Natural killer cell (primary cell): ENCODE measurements at regions of chr16 and their contacts with region 1.

Region 1: DNA sequence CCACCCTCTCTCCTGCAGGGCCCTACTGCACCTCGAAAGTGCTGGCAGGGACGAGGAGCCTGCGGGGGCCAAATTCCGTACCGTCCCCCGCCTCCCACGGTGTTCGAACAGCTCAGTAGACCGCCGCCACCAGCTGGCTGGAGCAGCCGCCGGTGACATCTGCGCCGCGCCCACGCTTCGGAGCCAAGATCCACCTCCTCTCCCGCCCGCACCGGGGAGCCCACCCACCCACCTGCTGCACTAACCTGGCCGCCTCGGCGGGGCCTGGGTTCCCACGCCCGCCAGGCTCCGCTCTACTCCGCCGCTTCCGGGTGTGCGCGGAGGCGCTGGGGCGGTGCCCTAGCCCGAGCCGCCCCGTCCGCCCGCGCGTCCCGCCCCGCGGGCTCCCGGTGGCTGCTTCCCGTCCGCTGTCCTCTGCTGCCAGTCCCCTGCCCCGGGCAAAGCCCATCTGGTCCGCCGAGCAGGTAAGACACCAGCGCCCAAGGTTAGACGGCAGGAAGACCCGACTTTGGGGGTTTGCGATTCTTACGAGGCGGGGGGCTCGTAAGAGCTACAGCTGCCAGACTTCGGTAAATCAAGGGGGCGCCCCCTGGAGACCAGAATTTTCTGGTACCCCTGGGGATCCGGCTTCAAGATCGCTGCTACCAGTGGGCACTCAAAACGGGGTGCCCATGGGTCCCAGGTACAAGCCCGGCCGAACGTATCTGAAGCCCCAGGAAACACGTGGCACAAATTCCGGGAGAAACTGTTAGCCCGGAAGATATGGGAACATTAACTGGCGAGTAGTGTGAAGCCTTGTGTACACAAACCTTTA is at the starts of genes FBXL8 and TRADD:
- DNase-seq: peak; percentile 82 to 90
- ATAC-seq: peak; percentile 69 to 85 (median 76)
- H3K4me3 ChIP-seq: peak within 1 kb of the TSS; percentile 93
- H3K4me3 Mint-ChIP-seq: peak within 1 kb of the TSS; percentile 88
- H3K27ac ChIP-seq: peak within 1 kb of the TSS; percentile 88
- H3K27ac Mint-ChIP-seq: peak within 1 kb of the TSS; percentile 80 to 85
- H3K4me1 ChIP-seq: peaks cover 82% of the 10 kb centered on the region
- H3K4me1 Mint-ChIP-seq: peaks cover 25 to 46% of the 10 kb centered on the region in 2 donors
- H3K27me3 ChIP-seq: peaks cover 27% of the 10 kb centered on the region
- H3K27me3 Mint-ChIP-seq: peaks cover 0 to 16% of the 10 kb centered on the region in 2 donors
- CTCF ChIP-seq: peak; percentile 61
- total RNA-seq, gene FBXL8: 5.2 to 8.3 (median 6.3) TPM
- total RNA-seq, gene TRADD: 15.2 to 27.5 (median 26.8) TPM

Region 2: GRCh38 chr16:66977341-66978113 is 182.3 kb before region 1 on chr16:
- intact Hi-C with region 1: loop called (anchors 1 kb)
- DNase-seq: peak; percentile 88 to 93
- ATAC-seq: peak; percentile 93 to 100 (median 99)
- H3K4me3 ChIP-seq: no peak overlapping the region
- H3K4me3 Mint-ChIP-seq: no peak overlapping the region
- H3K27ac ChIP-seq: no peak overlapping the region
- H3K27ac Mint-ChIP-seq: no peak overlapping the region
- H3K4me1 ChIP-seq: no peaks in the 10 kb centered on the region
- H3K4me1 Mint-ChIP-seq: no peaks in the 10 kb centered on the region
- H3K27me3 ChIP-seq: no peaks in the 10 kb centered on the region
- H3K27me3 Mint-ChIP-seq: peaks cover 0 to 4% of the 10 kb centered on the region in 2 donors
- CTCF ChIP-seq: peak; percentile 92

Region 3: GRCh38 chr16:67017810-67018488 is 141.9 kb before region 1 on chr16:
- intact Hi-C with region 1: loop called (anchors 1 kb)
- DNase-seq: peak; percentile 58 to 91
- ATAC-seq: peak; percentile 79 to 87 (median 81)
- H3K4me3 ChIP-seq: no peak overlapping the region
- H3K4me3 Mint-ChIP-seq: no peak overlapping the region
- H3K27ac ChIP-seq: no peak overlapping the region
- H3K27ac Mint-ChIP-seq: no peak overlapping the region
- H3K4me1 ChIP-seq: peaks cover 13% of the 10 kb centered on the region
- H3K4me1 Mint-ChIP-seq: peaks cover 0 to 3% of the 10 kb centered on the region in 2 donors
- H3K27me3 ChIP-seq: peaks cover 13% of the 10 kb centered on the region
- H3K27me3 Mint-ChIP-seq: peaks cover 0 to 17% of the 10 kb centered on the region in 2 donors
- CTCF ChIP-seq: peak; percentile 46

Region 4: DNA sequence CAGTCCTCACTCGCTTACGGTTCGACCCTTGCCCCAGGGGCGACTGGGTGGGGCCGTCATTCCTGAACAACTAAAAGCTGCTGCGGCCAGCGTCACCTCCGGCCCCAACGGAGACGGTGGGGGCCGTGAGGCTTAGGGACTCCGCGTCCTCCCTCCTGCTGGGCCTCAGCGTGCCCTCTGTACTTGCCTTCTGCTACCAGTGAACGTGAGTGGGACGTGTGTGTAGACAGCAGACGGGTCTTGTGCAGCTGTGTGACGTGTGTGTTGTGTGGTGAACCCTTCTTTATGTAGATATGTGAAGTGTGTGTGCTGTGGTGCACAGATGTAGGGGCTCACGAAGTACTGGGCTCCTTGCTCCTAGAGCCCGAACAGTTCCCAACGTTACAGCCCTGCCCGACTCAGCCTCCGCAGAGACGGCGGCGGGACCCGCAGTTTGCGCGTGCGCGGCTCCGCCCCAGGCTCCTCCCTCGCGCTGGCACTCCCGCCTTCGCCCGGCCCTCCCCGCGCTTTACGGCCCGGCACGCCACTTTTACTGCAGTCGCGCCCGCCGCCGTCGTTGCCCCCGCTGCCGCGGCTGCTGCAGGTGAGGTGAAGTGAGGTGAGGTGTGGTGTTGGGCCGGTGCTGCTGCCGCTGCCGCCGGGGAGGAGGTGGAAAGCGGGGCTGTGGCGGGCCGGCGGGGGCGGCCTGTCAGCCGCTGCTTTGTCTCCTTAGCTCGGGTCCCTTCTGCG is 50.2 kb before region 1 on chr16 and contains the start of gene PHAF1:
- intact Hi-C with region 1: loop called (anchors 5 kb)
- DNase-seq: peak; percentile 97
- ATAC-seq: peak; percentile 91 to 97 (median 95)
- H3K4me3 ChIP-seq: peak within 1 kb of the TSS; percentile 75
- H3K4me3 Mint-ChIP-seq: peak within 1 kb of the TSS; percentile 94
- H3K27ac ChIP-seq: peak within 1 kb of the TSS; percentile 31
- H3K27ac Mint-ChIP-seq: peak within 1 kb of the TSS; percentile 65 to 86
- H3K4me1 ChIP-seq: peaks cover 25% of the 10 kb centered on the region
- H3K4me1 Mint-ChIP-seq: peaks cover 34 to 38% of the 10 kb centered on the region in 2 donors
- H3K27me3 ChIP-seq: no peaks in the 10 kb centered on the region
- H3K27me3 Mint-ChIP-seq: no peaks in the 10 kb centered on the region
- CTCF ChIP-seq: no peak
- total RNA-seq, gene PHAF1: 17.0 to 22.4 (median 22.0) TPM

Region 5: GRCh38 chr16:67173808-67174705 is 14.3 kb after region 1 on chr16:
- intact Hi-C with region 1: loop called (anchors 2 kb)
- DNase-seq: peak; percentile 59 to 81
- ATAC-seq: peak; percentile 78 to 84 (median 80)
- H3K4me3 ChIP-seq: peak overlapping the region; percentile 38
- H3K4me3 Mint-ChIP-seq: peak overlapping the region; percentile 87
- H3K27ac ChIP-seq: no peak overlapping the region
- H3K27ac Mint-ChIP-seq: peak overlapping the region in 1 of 2 donors; percentile 89
- H3K4me1 ChIP-seq: peaks cover 57% of the 10 kb centered on the region
- H3K4me1 Mint-ChIP-seq: peaks cover 36 to 66% of the 10 kb centered on the region in 2 donors
- H3K27me3 ChIP-seq: peaks cover 23% of the 10 kb centered on the region
- H3K27me3 Mint-ChIP-seq: peaks cover 19 to 25% of the 10 kb centered on the region in 2 donors
- CTCF ChIP-seq: no peak

Region 6: DNA sequence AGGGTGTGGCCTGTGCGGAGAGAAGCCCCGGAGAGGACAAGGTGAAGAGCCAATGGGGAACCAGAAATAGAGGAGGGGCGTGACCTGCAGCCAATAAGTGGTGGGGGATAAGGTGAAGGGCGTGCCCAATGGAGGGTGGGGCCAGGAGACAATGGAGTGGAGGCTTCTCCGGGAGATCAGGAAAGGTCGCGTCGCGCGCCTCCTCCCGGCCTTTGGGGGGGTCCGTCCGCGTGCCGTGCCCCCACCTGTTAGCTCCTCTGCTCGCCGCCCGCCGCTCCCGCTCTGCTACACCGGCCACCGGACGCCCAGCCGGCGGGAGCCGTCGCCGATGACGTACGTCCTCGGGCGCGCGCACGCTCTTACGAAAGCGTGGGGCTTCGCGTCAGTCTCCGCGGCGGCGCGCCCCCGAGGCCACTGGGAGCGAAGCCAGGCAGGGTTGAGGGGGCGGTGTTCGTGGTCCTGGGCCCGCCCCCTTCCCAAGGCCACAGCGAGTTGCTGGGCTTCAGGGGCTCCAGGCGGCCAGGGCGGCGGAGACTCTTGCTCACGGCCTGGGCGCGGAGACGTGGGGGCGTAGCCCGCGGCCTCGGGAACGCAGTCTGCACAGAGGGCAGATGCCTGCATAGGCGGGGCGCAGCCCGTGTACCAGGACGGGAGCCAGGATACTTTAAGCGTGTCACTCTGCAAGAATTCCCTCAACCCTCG is 24.0 kb after region 1 on chr16 and contains the start of gene MATCAP1:
- intact Hi-C with region 1: loop called (anchors 1 kb)
- DNase-seq: peak; percentile 90 to 97
- ATAC-seq: peak; percentile 93 to 97 (median 94)
- H3K4me3 ChIP-seq: peak within 1 kb of the TSS; percentile 63
- H3K4me3 Mint-ChIP-seq: peak within 1 kb of the TSS; percentile 95
- H3K27ac ChIP-seq: peak within 1 kb of the TSS; percentile 79
- H3K27ac Mint-ChIP-seq: peak within 1 kb of the TSS in 1 of 2 donors; percentile 83
- H3K4me1 ChIP-seq: peaks cover 24% of the 10 kb centered on the region
- H3K4me1 Mint-ChIP-seq: peaks cover 8 to 14% of the 10 kb centered on the region in 2 donors
- H3K27me3 ChIP-seq: peaks cover 2% of the 10 kb centered on the region
- H3K27me3 Mint-ChIP-seq: peaks cover 0 to 7% of the 10 kb centered on the region in 2 donors
- CTCF ChIP-seq: no peak
- total RNA-seq, gene MATCAP1: 7.2 to 12.6 (median 10.9) TPM